ENCODE measurements at regions of chr9 and their contacts with region 1.

Region 1: DNA sequence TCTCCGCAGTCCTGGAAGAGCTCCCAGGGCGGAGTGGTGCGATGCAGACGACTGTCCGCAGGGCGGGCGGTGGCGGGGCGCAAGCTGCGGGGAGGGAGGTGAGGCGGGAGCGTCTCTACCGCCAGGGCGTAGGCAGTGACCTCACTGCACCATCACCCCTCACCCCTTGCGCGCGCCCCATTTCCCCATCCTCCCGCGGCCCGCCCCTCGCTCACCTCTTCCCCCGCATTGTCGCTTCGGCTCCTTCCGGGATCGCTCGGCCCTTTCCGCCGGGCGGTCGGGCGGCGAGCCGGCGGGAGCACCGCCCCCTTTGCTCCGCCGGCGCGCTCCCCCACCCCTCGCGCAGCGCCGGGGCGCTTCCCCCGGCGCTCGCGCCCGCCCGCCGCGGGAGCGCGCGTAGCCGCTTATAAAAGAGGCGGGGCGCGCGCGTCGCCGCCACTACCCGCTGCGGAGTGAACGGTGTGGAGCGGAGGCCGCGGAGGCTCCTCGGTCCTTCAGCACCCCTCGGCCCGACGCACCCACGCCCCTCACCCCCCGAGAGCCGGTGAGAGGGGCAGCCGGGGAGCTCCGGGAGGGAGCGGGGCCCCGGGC is at the start of gene SPTAN1:
- DNase-seq: peak; percentile 89
- H3K4me3 ChIP-seq: peak within 1 kb of the TSS; percentile 78 to 99 (median 92)
- H3K27ac ChIP-seq: peak within 1 kb of the TSS; percentile 74
- H3K4me1 ChIP-seq: peaks cover 52% of the 10 kb centered on the region
- H3K27me3 ChIP-seq: no peaks in the 10 kb centered on the region
- CTCF ChIP-seq: no peak
- POLR2A ChIP-seq: peak; percentile 99
- total RNA-seq, gene SPTAN1: 478 and 502 TPM in 2 replicates

Region 2: DNA sequence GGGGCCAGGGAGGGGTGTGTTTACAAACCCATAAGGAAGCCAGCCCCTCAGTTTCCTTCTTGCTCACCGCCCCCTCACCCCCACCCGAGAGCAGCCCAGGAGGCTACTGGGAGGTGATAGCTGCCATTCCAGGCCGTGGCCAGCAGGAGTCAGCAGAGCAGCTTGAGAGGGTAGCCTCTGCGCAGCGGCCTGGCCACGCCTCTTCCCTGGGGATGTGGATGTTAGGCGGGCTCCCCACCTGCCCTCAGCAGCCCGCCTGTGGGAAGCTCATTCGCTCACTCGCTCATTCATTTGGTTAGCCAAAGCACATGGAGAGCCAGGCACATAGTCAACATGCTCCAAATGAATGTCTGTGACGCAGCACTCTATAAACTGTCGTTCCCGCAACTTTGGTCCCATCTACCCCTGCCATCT is 608.5 kb before region 1 on chr9:
- CTCF ChIA-PET with region 1: no interaction called
- POLR2A ChIA-PET with region 1: no interaction called
- dilution Hi-C with region 1: no loop called
- intact Hi-C with region 1: no loop called
- DNase-seq: peak; percentile 71
- H3K4me3 ChIP-seq: no peak overlapping the region
- H3K27ac ChIP-seq: no peak overlapping the region
- H3K4me1 ChIP-seq: no peaks in the 10 kb centered on the region
- H3K27me3 ChIP-seq: no peaks in the 10 kb centered on the region
- CTCF ChIP-seq: peak; percentile 90 to 99
- POLR2A ChIP-seq: no peak

Region 3: GRCh38 chr9:128361986-128362646 is 190.1 kb before region 1 on chr9:
- CTCF ChIA-PET with region 1: no interaction called
- POLR2A ChIA-PET with region 1: no interaction called
- dilution Hi-C with region 1: no loop called
- intact Hi-C with region 1: loop called (anchors 5 kb)
- DNase-seq: peak; percentile 87
- H3K4me3 ChIP-seq: peak overlapping the region in 2 of 3 experiments; percentile 37 to 48
- H3K27ac ChIP-seq: no peak overlapping the region
- H3K4me1 ChIP-seq: peaks cover 17% of the 10 kb centered on the region
- H3K27me3 ChIP-seq: no peaks in the 10 kb centered on the region
- CTCF ChIP-seq: peak; percentile 79 to 92
- POLR2A ChIP-seq: peak; percentile 66

Region 4: DNA sequence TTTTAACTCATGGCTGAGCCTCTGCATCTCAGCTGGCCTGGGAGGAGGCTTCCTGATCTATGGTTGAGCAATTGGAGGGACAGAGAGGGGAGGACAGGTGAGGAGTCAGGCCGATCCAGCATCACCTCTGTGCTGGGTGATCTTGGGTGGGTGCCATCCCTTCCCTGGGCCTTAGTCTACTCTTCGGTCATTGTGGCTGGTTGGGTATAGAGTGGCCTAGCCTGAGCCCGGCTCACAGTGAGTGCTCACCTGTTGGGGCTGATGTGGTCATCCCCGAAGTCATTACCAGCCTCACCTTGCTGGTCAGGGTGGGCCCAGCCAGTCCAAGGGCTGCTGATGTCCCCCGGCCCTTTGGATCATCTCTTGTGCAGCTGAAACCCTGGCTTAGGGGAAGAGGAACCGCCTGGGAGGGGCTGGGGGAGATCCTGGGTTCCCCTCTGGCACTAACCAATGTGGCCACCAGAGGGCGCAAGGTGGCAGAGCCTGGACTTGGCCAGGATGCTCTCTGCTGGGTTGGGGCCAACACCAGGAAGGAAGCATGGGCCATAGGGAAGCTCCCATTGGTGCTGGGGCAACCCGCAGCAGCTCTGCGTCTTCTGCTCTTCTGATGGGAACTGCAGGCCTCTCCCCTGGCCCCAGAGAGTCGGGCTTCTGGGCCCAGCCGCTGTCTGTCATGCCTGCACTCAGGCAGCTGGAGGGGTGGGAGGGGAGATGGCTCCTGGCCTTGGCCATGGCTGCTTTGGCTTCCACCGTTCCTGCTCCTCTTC is 113.7 kb before region 1 on chr9:
- CTCF ChIA-PET with region 1: interaction called, 22 read pairs
- POLR2A ChIA-PET with region 1: interaction called, 3 read pairs
- dilution Hi-C with region 1: no loop called
- intact Hi-C with region 1: loop called (anchors 5 kb)
- DNase-seq: peak; percentile 78
- H3K4me3 ChIP-seq: no peak overlapping the region
- H3K27ac ChIP-seq: no peak overlapping the region
- H3K4me1 ChIP-seq: peaks cover 2% of the 10 kb centered on the region
- H3K27me3 ChIP-seq: no peaks in the 10 kb centered on the region
- CTCF ChIP-seq: peak; percentile 92 to 98
- POLR2A ChIP-seq: peak; percentile 63

Region 5: DNA sequence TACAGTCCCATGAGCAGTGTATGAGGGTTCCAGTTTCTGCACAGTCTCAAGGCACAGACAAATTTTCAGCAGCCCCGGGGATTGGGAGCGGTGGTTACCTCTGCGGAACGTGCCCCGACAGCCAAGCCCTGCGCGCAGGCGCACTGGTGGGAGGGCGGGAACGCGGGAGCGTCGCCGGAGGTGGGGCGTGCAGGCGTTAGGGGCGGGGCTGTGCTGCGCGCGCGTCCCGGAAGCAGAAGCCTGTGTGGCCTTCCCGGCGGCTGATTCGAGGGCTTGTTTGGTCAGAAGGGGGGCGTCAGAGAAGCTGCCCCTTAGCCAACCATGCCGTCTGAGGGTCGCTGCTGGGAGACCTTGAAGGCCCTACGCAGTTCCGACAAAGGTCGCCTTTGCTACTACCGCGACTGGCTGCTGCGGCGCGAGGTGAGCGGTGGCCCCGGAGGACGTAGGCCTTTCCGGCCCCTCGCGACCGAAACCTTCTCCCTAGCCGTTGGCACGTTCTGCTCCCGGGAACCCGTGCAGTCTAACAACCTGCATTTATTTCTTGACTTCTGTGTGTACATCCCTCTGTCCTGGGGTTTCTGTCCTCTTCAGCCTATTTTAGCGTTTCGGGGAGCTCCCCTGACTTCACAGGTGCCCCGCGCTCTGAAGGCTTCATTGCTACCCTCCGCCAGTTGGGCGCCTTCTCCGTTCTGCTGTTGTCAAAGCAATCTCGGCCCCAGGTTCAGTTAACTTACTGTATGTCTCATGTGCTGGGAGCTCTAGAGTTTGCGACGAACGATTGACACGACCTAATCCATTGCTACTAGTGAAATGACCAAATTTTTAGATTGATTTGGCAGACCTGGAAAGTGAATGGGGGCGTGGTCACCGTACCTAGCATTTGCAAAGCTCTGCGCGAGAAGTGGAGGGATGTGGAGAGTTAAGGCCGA is 47.5 kb before region 1 on chr9 and contains the start of gene GLE1:
- CTCF ChIA-PET with region 1: interaction called, 12 read pairs
- POLR2A ChIA-PET with region 1: interaction called, 7 read pairs
- dilution Hi-C with region 1: no loop called
- intact Hi-C with region 1: loop called (anchors 2 kb)
- DNase-seq: peak; percentile 94
- H3K4me3 ChIP-seq: peak within 1 kb of the TSS; percentile 22 to 80 (median 72)
- H3K27ac ChIP-seq: peak within 1 kb of the TSS; percentile 12
- H3K4me1 ChIP-seq: peaks cover 7% of the 10 kb centered on the region
- H3K27me3 ChIP-seq: no peaks in the 10 kb centered on the region
- CTCF ChIP-seq: no peak
- POLR2A ChIP-seq: peak; percentile 93
- total RNA-seq, gene GLE1: 20.5 and 22.6 TPM in 2 replicates

Region 6: GRCh38 chr9:128540634-128541360 is 11.5 kb before region 1 on chr9:
- CTCF ChIA-PET with region 1: interaction called, 11 read pairs
- POLR2A ChIA-PET with region 1: interaction called, 11 read pairs
- dilution Hi-C with region 1: no loop called
- intact Hi-C with region 1: no loop called
- DNase-seq: no peak
- H3K4me3 ChIP-seq: no peak overlapping the region
- H3K27ac ChIP-seq: no peak overlapping the region
- H3K4me1 ChIP-seq: no peaks in the 10 kb centered on the region
- H3K27me3 ChIP-seq: no peaks in the 10 kb centered on the region
- CTCF ChIP-seq: no peak
- POLR2A ChIP-seq: no peak

Region 7: GRCh38 chr9:128688512-128689292 is 136.5 kb after region 1 on chr9 and contains the start of gene SET:
- CTCF ChIA-PET with region 1: no interaction called
- POLR2A ChIA-PET with region 1: interaction called, 3 read pairs
- dilution Hi-C with region 1: no loop called
- intact Hi-C with region 1: loop called (anchors 5 kb)
- DNase-seq: peak; percentile 94
- H3K4me3 ChIP-seq: peak within 1 kb of the TSS; percentile 50 to 79 (median 78)
- H3K27ac ChIP-seq: peak within 1 kb of the TSS; percentile 61
- H3K4me1 ChIP-seq: peaks cover 18% of the 10 kb centered on the region
- H3K27me3 ChIP-seq: no peaks in the 10 kb centered on the region
- CTCF ChIP-seq: no peak
- POLR2A ChIP-seq: no peak
- total RNA-seq, gene SET: 448 and 483 TPM in 2 replicates

Measured in endothelial cell of umbilical vein (primary cell).